HepG2 (cell line): ENCODE measurements at regions of chr6 and their contacts with region 1.

Region 1: GRCh38 chr6:136031982-136032381 is 180.5 kb downstream of the PDE7B start:
- DNase-seq: peak; percentile 15
- ATAC-seq: peak; percentile 79
- H3K4me3 ChIP-seq: no peak overlapping the region
- H3K27ac ChIP-seq: no peak overlapping the region
- H3K4me1 ChIP-seq: no peaks in the 10 kb centered on the region
- H3K27me3 ChIP-seq: peaks cover 0 to 4% of the 10 kb centered on the region in 2 experiments; a peak in 1 of 5 replicates
- CTCF ChIP-seq: peak; percentile 26; the same call in 1 of the 2 replicates
- EP300 ChIP-seq: no peak
- POLR2A ChIP-seq: no peak
- RAD21 ChIP-seq: no peak

Region 2: DNA sequence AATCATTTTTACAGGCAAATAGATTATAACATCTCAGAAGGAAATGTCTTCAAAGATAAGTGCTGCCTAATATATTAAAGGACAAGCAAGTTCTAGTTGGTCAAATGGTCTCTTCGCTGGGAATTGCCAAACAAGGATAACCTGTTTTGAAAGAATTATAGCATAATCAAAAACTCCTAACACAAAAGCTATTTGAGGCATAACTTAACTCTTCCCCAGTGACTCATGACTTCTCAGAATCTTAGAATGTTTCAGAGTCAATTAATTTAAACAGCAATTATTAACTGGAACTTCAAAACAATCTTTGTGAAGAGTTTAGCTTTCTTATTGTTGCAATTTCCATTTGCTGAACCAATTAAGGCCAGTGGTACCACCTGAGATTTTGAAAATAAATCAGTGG is 91.5 kb after region 1 on chr6:
- CTCF ChIA-PET with region 1: no interaction called
- POLR2A ChIA-PET with region 1: no interaction called
- in situ Hi-C with region 1: no loop called
- intact Hi-C with region 1: no loop called
- DNase-seq: no peak
- ATAC-seq: no peak
- H3K4me3 ChIP-seq: no peak overlapping the region
- H3K27ac ChIP-seq: no peak overlapping the region
- H3K4me1 ChIP-seq: no peaks in the 10 kb centered on the region
- H3K27me3 ChIP-seq: no peaks in the 10 kb centered on the region
- CTCF ChIP-seq: no peak
- EP300 ChIP-seq: no peak
- POLR2A ChIP-seq: no peak
- RAD21 ChIP-seq: no peak

Region 3: DNA sequence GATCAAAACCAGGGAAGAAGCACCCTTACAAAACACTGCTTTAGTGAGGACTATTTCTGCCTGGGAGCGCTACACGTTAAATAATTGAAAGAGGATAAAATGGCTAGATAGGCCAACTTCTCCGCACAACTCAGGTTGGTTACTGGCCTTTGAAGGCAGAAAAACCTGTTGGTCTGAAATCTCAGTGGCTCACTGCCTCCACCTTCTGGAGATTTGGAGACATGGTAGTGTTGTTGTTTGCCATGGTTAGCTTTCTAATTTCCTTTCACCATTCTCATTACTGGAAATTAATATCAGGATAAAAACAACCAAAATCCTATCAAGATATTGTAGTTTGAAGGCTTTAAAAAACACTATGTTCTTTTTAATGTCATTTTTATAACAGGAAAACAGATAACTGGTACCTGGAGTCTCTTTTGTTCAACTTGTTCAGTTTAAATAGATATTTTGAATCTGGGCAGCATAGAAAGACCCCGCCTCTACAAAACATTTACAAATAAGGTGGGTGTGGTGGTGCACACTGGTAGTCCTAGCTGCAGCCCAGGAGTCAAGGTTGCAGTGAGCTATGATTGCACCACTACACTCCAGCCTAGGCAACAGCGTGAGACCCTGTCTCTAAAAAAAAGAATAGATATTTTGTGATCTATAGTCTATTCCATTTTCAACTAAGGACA is 285.2 kb after region 1 on chr6:
- CTCF ChIA-PET with region 1: no interaction called
- POLR2A ChIA-PET with region 1: no interaction called
- in situ Hi-C with region 1: no loop called
- intact Hi-C with region 1: loop called (anchors 5 kb)
- DNase-seq: peak; percentile 62
- ATAC-seq: peak; percentile 95
- H3K4me3 ChIP-seq: no peak overlapping the region
- H3K27ac ChIP-seq: no peak overlapping the region
- H3K4me1 ChIP-seq: no peaks in the 10 kb centered on the region
- H3K27me3 ChIP-seq: no peaks in the 10 kb centered on the region; a peak in 2 of 5 replicates
- CTCF ChIP-seq: peak; percentile 86
- EP300 ChIP-seq: no peak
- POLR2A ChIP-seq: no peak
- RAD21 ChIP-seq: peak; percentile 69

Region 4: DNA sequence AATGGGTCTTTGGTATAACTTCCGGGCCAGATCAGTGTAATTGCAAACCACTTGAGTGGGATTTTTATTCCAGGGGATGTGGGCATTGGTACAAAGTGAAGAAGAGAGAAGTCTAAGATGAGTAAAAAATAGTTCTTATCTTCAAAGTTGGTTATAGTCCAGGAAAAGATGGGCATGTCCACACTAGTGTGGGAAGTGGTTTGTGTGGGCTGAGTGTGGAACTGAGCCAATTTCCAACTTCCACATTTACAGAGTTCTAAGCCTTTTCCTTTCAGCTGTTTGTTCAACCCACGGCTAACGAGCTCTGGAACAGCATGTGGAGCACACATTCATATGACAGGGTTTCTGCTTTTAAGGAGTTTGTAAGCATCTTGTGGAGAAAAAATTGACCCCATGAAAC is 1259.5 kb after region 1 on chr6:
- CTCF ChIA-PET with region 1: no interaction called
- POLR2A ChIA-PET with region 1: no interaction called
- in situ Hi-C with region 1: no loop called
- intact Hi-C with region 1: no loop called
- DNase-seq: no peak
- ATAC-seq: no peak
- H3K4me3 ChIP-seq: no peak overlapping the region
- H3K27ac ChIP-seq: no peak overlapping the region
- H3K4me1 ChIP-seq: no peaks in the 10 kb centered on the region
- H3K27me3 ChIP-seq: peaks cover 0 to 21% of the 10 kb centered on the region in 2 experiments; a peak in 2 of 5 replicates
- CTCF ChIP-seq: no peak
- EP300 ChIP-seq: no peak
- POLR2A ChIP-seq: no peak
- RAD21 ChIP-seq: no peak